MCF 10A (cell line): ENCODE measurements at regions of chr2 and their contacts with region 1.

Region 1: GRCh38 chr2:166375736-166376487 is at the start of gene SCN9A:
- DNase-seq: peak; percentile 61
- H3K4me3 Mint-ChIP-seq: peak within 1 kb of the TSS; percentile 75
- H3K27ac Mint-ChIP-seq: no peak within 1 kb of the TSS
- H3K4me1 Mint-ChIP-seq: peaks cover 6% of the 10 kb centered on the region
- H3K27me3 Mint-ChIP-seq: peaks cover 63% of the 10 kb centered on the region
- CTCF ChIP-seq: peak; percentile 5
- total RNA-seq, gene SCN9A: 1.3 and 1.9 TPM in 2 replicates

Region 2: DNA sequence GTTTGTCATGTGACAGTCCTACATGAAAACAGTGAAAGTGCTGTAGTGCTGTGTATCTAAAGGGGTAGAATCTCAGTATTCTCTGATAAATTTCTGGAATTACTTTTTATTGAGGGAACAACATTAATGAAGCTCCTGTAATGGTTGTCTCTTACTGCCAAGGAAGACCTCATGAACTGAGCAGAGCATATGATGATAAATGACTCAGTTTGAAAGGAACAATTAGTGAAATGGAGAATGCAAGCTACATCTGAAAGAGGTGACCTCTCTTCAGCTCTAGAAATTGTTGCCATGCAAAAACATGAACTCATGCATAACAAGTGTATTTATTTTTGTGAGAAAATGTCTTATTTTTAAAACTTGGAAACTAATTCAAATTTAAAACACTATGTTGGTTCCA is 93.8 kb before region 1 on chr2:
- CTCF ChIA-PET with region 1: no interaction called
- POLR2A ChIA-PET with region 1: no interaction called
- intact Hi-C with region 1: no loop called
- DNase-seq: no peak
- H3K4me3 Mint-ChIP-seq: no peak overlapping the region
- H3K27ac Mint-ChIP-seq: no peak overlapping the region
- H3K4me1 Mint-ChIP-seq: no peaks in the 10 kb centered on the region
- H3K27me3 Mint-ChIP-seq: no peaks in the 10 kb centered on the region
- CTCF ChIP-seq: no peak

Region 3: GRCh38 chr2:166314022-166314759 is 61.7 kb before region 1 on chr2:
- CTCF ChIA-PET with region 1: no interaction called
- POLR2A ChIA-PET with region 1: no interaction called
- intact Hi-C with region 1: no loop called
- DNase-seq: peak; percentile 48
- H3K4me3 Mint-ChIP-seq: no peak overlapping the region
- H3K27ac Mint-ChIP-seq: peak overlapping the region; percentile 8
- H3K4me1 Mint-ChIP-seq: no peaks in the 10 kb centered on the region
- H3K27me3 Mint-ChIP-seq: no peaks in the 10 kb centered on the region
- CTCF ChIP-seq: no peak

Region 4: DNA sequence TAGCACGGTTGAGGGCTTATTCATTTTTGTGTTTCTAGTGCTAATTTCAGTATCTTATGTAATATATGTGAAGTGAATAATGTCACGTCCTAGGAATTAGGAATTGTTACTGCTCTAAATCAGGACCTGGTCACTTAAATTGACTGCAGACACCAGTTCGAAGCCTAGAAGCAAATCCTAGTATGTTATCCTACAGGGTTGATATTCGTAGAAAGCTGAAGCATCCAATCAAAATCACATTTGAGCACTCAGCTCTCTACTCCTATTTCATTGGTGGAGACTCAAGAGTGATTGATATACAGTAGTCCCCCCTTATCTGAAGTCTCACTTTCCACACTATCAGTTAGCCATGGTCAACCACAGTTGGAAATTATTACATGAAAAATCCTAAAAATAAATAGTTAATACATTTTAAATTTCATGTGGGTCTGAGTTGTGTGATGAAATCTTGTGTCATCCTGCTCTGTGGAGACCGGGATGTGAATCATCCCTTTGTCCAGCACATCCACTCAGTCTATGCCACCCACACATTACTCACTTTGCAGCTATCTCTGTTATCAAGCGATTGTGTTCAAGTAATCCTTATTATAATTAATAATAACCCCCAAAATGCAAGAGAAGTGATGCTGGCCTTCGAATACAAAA is 35.0 kb after region 1 on chr2:
- CTCF ChIA-PET with region 1: no interaction called
- POLR2A ChIA-PET with region 1: no interaction called
- intact Hi-C with region 1: loop called (anchors 5 kb)
- DNase-seq: peak; percentile 78
- H3K4me3 Mint-ChIP-seq: no peak overlapping the region
- H3K27ac Mint-ChIP-seq: peak overlapping the region; percentile 74
- H3K4me1 Mint-ChIP-seq: peaks cover 19% of the 10 kb centered on the region
- H3K27me3 Mint-ChIP-seq: no peaks in the 10 kb centered on the region
- CTCF ChIP-seq: no peak

Region 5: GRCh38 chr2:166550923-166551322 is 175.0 kb after region 1 on chr2:
- CTCF ChIA-PET with region 1: no interaction called
- POLR2A ChIA-PET with region 1: no interaction called
- intact Hi-C with region 1: no loop called
- DNase-seq: no peak
- H3K4me3 Mint-ChIP-seq: no peak overlapping the region
- H3K27ac Mint-ChIP-seq: no peak overlapping the region
- H3K4me1 Mint-ChIP-seq: no peaks in the 10 kb centered on the region
- H3K27me3 Mint-ChIP-seq: peaks cover 49% of the 10 kb centered on the region
- CTCF ChIP-seq: no peak